MCF 10A (cell line): ENCODE measurements at regions of chr5 and their contacts with region 1.

Region 1: DNA sequence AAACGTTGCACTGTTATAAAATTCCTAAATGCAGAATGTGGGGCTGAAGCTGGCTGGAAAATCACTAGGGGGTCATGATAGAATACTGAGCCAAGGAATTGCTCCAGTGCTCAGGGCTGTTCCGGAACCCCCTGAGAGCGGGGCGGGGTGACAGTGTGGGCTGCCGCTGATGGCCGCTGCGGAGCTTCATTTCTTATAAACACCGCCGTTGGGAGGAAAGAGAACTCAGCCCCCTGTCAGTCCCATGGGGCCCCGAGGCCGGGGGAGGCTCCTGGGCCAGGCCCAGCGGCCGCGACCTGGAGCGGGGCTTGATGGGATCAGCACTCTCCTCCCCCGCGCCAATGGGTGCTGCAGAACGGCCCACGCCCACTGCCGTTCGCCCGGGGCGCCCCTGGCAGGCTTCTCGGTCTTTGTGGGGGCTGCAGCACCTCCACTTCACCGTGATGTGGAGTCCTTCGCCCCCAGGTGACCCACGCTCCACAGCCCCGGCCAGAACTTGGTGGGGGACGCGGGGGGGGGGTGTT is 5.2 kb upstream of the IRF1 start:
- DNase-seq: peak; percentile 92
- H3K4me3 Mint-ChIP-seq: peak overlapping the region; percentile 80
- H3K27ac Mint-ChIP-seq: peak overlapping the region; percentile 34
- H3K4me1 Mint-ChIP-seq: peaks cover 47% of the 10 kb centered on the region
- H3K27me3 Mint-ChIP-seq: no peaks in the 10 kb centered on the region
- CTCF ChIP-seq: no peak

Region 2: GRCh38 chr5:132293066-132293991 is 202.4 kb before region 1 on chr5:
- CTCF ChIA-PET with region 1: interaction called, 9 read pairs
- POLR2A ChIA-PET with region 1: interaction called, 13 read pairs
- intact Hi-C with region 1: loop called (anchors 10 kb)
- DNase-seq: peak; percentile 91
- H3K4me3 Mint-ChIP-seq: peak overlapping the region; percentile 98
- H3K27ac Mint-ChIP-seq: peak overlapping the region; percentile 89
- H3K4me1 Mint-ChIP-seq: peaks cover 40% of the 10 kb centered on the region
- H3K27me3 Mint-ChIP-seq: no peaks in the 10 kb centered on the region
- CTCF ChIP-seq: peak; percentile 19

Region 3: DNA sequence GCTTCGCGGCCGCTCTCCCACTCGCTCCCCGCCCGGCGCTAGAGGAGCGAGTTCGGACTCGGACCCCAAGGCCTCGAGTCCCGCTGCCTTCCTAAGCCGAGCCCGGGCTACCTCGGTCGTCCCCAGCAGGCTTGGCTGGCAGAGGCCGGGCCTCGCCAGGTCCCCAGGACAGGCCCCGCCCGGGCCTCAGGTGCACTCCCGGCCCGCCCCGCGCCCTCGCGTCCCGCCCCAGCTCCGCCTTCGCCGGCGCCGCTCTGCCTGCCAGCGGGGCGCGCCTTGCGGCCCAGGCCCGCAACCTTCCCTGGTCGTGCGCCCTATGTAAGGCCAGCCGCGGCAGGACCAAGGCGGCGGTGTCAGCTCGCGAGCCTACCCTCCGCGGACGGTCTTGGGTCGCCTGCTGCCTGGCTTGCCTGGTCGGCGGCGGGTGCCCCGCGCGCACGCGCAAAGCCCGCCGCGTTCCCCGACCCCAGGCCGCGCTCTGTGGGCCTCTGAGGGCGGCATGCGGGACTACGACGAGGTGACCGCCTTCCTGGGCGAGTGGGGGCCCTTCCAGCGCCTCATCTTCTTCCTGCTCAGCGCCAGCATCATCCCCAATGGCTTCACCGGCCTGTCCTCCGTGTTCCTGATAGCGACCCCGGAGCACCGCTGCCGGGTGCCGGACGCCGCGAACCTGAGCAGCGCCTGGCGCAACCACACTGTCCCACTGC is 126.1 kb before region 1 on chr5 and contains the start of gene SLC22A5:
- CTCF ChIA-PET with region 1: interaction called, 33 read pairs
- POLR2A ChIA-PET with region 1: interaction called, 72 read pairs
- intact Hi-C with region 1: no loop called
- DNase-seq: peak; percentile 84
- H3K4me3 Mint-ChIP-seq: peak within 1 kb of the TSS; percentile 79
- H3K27ac Mint-ChIP-seq: peak within 1 kb of the TSS; percentile 39
- H3K4me1 Mint-ChIP-seq: peaks cover 44% of the 10 kb centered on the region
- H3K27me3 Mint-ChIP-seq: no peaks in the 10 kb centered on the region
- CTCF ChIP-seq: no peak
- total RNA-seq, gene SLC22A5: 122 and 167 TPM in 2 replicates

Region 4: GRCh38 chr5:132419502-132420468 is 75.9 kb before region 1 on chr5:
- CTCF ChIA-PET with region 1: interaction called, 89 read pairs
- POLR2A ChIA-PET with region 1: interaction called, 78 read pairs
- intact Hi-C with region 1: loop called (anchors 1 kb)
- DNase-seq: peak; percentile 87
- H3K4me3 Mint-ChIP-seq: no peak overlapping the region
- H3K27ac Mint-ChIP-seq: peak overlapping the region; percentile 17
- H3K4me1 Mint-ChIP-seq: peaks cover 35% of the 10 kb centered on the region
- H3K27me3 Mint-ChIP-seq: no peaks in the 10 kb centered on the region
- CTCF ChIP-seq: peak; percentile 97

Region 5: GRCh38 chr5:132446669-132447068 is 49.1 kb before region 1 on chr5:
- CTCF ChIA-PET with region 1: interaction called, 9 read pairs
- POLR2A ChIA-PET with region 1: interaction called, 25 read pairs
- intact Hi-C with region 1: no loop called
- DNase-seq: peak; percentile 96
- H3K4me3 Mint-ChIP-seq: no peak overlapping the region
- H3K27ac Mint-ChIP-seq: peak overlapping the region; percentile 34
- H3K4me1 Mint-ChIP-seq: peaks cover 51% of the 10 kb centered on the region
- H3K27me3 Mint-ChIP-seq: no peaks in the 10 kb centered on the region
- CTCF ChIP-seq: no peak

Region 6: DNA sequence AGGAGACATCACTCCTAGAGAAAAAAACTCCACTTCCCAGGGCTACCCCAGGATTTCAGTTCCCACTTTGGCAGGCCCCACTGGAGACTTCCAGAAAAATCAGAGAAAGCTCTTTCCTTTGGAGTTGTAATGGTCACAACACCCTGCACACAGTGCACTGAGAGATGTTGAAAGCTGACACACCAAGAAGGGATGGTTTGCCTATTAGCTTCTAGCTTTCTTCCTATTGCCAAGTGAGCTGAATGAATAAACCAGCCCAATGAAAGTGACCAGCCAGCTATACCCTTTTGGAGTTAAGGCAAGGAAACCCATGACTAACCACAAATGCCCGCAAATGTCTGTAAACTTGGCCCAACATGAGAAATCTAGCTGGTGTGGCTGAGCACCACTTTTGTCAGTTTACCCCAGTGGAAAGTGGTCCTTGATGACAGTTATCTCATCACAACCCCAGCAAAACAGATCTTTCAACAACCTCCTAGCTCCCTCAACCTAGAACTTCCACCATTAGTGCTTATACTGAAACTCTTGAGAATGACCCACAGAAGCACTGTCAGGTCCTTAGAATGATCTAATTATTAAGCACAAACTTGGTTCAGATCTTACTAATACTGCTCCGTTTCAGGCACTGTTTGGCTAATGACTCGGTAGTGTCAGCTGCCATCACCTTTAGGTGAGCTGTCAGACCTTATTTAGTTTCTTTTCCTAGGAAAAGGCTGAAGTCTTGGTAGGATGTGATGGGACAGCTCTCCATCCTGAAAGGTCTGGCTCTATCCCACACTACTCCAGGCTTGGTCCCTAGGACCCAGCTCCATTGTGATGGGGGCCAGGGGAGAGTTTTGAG is 16.4 kb before region 1 on chr5:
- CTCF ChIA-PET with region 1: interaction called, 14 read pairs
- POLR2A ChIA-PET with region 1: interaction called, 47 read pairs
- intact Hi-C with region 1: no loop called
- DNase-seq: no peak
- H3K4me3 Mint-ChIP-seq: no peak overlapping the region
- H3K27ac Mint-ChIP-seq: no peak overlapping the region
- H3K4me1 Mint-ChIP-seq: no peaks in the 10 kb centered on the region
- H3K27me3 Mint-ChIP-seq: no peaks in the 10 kb centered on the region
- CTCF ChIP-seq: no peak

Region 7: DNA sequence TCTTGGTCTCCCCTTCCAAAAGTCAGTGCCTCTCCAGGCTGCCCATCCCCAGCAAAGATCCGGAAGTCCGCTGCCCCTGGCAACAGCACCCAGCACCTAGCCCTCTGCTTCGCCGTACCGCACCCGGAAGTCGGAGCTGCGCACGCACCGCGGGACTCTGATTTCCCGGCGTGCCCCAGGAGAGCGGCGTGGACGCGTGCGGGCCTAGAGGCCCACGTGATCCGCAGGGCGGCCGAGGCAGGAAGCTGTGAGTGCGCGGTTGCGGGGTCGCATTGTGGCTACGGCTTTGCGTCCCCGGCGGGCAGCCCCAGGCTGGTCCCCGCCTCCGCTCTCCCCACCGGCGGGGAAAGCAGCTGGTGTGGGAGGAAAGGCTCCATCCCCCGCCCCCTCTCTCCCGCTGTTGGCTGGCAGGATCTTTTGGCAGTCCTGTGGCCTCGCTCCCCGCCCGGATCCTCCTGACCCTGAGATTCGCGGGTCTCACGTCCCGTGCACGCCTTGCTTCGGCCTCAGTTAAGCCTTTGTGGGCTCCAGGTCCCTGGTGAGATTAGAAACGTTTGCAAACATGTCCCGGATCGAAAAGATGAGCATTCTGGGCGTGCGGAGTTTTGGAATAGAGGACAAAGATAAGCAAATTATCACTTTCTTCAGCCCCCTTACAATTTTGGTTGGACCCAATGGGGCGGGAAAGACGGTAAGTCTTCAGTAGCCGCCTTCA is 61.2 kb after region 1 on chr5 and contains the start of gene RAD50:
- CTCF ChIA-PET with region 1: interaction called, 4 read pairs
- POLR2A ChIA-PET with region 1: interaction called, 11 read pairs
- intact Hi-C with region 1: no loop called
- DNase-seq: peak; percentile 97
- H3K4me3 Mint-ChIP-seq: peak within 1 kb of the TSS; percentile 97
- H3K27ac Mint-ChIP-seq: peak within 1 kb of the TSS; percentile 99
- H3K4me1 Mint-ChIP-seq: peaks cover 16% of the 10 kb centered on the region
- H3K27me3 Mint-ChIP-seq: no peaks in the 10 kb centered on the region
- CTCF ChIP-seq: no peak
- total RNA-seq, gene RAD50: 145 TPM in 2 replicates